Activated CD8-positive, alpha-beta memory T cell treated with anti-CD3 and anti-CD28 coated beads, Interleukin-2, amount 10 ng/mL, durations not matched to agents 7 days and 5 days (primary cell): ENCODE measurements at regions of chr11 and their contacts with region 1.

Region 1: DNA sequence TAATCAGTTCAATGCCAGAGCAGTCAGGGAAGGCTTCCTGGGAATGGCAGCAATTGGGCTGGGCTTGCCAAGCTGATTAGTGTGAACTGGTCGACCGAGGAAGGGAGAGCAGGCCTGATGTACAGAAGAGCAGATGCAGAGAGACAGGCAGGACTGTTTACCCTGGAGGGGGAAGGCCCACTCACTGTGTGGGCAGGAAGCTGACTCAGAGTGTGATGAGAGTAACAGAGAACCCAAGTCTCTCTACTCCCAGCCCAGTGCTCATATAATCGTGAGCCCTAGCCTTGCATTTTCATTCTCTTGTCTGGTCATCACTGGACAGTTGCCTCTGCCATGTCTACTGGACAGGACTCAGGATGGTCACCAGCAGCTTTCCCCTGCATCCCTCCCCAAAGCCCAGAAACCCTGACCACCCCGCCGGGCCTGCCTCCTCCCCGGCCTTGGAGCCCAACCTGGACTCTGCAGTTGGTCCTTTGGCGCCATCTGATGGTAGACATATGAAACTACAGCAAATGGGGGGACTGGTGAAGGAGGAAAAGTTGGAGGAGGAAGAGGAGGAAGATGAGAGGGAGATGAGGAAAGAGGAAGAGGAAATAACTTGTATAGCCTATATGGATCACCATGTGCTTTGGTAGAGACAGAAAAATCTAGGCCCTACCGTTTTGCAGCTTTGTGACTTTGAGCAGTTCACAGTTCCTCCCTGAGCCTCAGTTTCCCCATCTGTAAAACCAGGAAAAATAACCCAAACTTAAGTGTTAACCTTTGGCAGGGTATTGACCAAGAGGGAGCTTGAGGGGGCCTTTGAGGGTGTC is 43.4 kb upstream of the PRDM11 start:
- DNase-seq: peak; percentile 86
- ATAC-seq: peak; percentile 99
- H3K4me3 Mint-ChIP-seq: peak overlapping the region; percentile 66
- H3K27ac Mint-ChIP-seq: peak overlapping the region; percentile 85
- H3K4me1 Mint-ChIP-seq: peaks cover 13% of the 10 kb centered on the region
- H3K27me3 Mint-ChIP-seq: peaks cover 23% of the 10 kb centered on the region

Region 2: DNA sequence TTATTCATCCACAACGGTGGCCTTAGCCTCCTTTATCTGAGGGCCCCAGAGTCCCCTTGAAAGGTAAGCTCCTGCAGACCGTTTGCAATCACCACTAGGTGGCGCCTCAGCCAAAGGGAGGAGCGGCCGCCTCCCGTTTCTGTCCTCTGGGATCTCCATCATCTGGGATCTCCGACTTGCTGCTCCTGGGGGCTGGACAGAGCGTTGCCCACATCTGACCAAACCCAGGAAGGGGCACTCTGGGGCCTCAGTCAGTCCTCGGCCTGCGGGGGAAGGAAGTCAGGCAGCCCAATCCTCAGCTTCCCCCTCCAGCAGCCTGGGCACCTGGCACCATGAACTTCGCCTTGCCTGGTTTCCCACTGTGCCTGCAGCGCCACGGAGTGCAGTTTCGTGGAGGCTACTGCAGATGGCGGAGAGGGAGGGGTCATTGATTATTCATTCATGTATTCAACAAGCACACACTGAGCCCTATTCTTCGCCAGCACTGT is 175.8 kb before region 1 on chr11:
- CTCF ChIA-PET with region 1: interaction called, 373 read pairs
- DNase-seq: peak; percentile 63
- ATAC-seq: peak; percentile 71
- H3K4me3 Mint-ChIP-seq: no peak overlapping the region
- H3K27ac Mint-ChIP-seq: no peak overlapping the region
- H3K4me1 Mint-ChIP-seq: no peaks in the 10 kb centered on the region
- H3K27me3 Mint-ChIP-seq: no peaks in the 10 kb centered on the region

Region 3: DNA sequence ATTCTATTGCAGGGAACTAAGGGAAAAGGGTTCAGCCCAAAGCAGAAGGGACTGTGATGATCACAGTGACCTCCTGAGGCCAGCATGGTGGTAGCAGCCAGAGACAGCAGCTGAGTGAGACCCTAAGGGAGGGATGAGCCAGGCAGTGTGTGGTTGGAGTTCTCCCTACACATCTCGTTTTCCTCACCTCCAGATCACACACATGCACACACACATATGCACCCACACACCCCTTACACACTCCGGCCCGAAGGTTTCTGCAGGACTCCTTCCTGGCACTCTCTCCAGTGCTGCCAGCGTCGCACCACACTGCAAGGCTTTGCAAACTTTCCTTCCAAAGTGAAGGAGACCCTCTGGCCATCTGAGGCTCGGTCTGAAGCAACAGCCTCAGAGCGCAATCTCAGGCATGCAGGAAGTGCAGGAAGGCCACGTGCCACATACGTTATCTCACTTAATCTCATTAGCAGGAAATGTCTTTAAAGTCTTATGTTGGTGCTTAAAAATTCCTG is 125.5 kb before region 1 on chr11:
- CTCF ChIA-PET with region 1: interaction called, 16 read pairs
- DNase-seq: no peak
- ATAC-seq: no peak
- H3K4me3 Mint-ChIP-seq: no peak overlapping the region
- H3K27ac Mint-ChIP-seq: no peak overlapping the region
- H3K4me1 Mint-ChIP-seq: peaks cover 20% of the 10 kb centered on the region
- H3K27me3 Mint-ChIP-seq: no peaks in the 10 kb centered on the region

Region 4: DNA sequence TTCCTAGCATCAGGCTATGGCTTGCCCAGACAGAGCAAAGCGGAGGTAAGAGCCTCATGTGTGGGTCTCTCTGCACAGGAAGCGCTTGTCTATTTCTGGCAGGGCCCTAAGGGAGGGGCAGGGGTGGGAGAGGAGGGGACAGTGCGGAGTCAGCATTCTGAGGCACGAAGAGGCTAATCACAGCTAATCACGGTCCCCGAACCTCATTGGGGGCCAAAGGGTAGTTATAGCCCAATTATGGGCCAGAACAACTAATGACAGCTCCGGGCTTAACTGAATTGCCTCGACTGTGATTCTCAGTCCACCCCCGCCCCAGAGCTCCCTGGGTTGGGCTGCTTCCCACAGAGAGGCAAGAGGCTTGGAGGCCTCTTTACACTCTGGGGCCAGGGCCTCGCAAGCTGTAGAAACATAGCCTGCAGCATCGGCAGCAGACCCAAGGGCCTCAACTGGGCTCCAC is 29.3 kb before region 1 on chr11:
- CTCF ChIA-PET with region 1: interaction called, 47 read pairs
- DNase-seq: no peak
- ATAC-seq: no peak
- H3K4me3 Mint-ChIP-seq: no peak overlapping the region
- H3K27ac Mint-ChIP-seq: no peak overlapping the region
- H3K4me1 Mint-ChIP-seq: peaks cover 4% of the 10 kb centered on the region
- H3K27me3 Mint-ChIP-seq: peaks cover 3% of the 10 kb centered on the region

Region 5: GRCh38 chr11:45089676-45090499 is 13.1 kb before region 1 on chr11:
- CTCF ChIA-PET with region 1: interaction called, 34 read pairs
- DNase-seq: peak; percentile 54
- ATAC-seq: peak; percentile 46
- H3K4me3 Mint-ChIP-seq: no peak overlapping the region
- H3K27ac Mint-ChIP-seq: no peak overlapping the region
- H3K4me1 Mint-ChIP-seq: peaks cover 20% of the 10 kb centered on the region
- H3K27me3 Mint-ChIP-seq: peaks cover 7% of the 10 kb centered on the region